Activated CD4-positive, alpha-beta T cell treated with anti-CD3 and anti-CD28 coated beads, Interleukin-2, amount 10 ng/mL, durations not matched to agents 7 days and 5 days (primary cell): ENCODE measurements at regions of chr4 and their contacts with region 1.

Region 1: DNA sequence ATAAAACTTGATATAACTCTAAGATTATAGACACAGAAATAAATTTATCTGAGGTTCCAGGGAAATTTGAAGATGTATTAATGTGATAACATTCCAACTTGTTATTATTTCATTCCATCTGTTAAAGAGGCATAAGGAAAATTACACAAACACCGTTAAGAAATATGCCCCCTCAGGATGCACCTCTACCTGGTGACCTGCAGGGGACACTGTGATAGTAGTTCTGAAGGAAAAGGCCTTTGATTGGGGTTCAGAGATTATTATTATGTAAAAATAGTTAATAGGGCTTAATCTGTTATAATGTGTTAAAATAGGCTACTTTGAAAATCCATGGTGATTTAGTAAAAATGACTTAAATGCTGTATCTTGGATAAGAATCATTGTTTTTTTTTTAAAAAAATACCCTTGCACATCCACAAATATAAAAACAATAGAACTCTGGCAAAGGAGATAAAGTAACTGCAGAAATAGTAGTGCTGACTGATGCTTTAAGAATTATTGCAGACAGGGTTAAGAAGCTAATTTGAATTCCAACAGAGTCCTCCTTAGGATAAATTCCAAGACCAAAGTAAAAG is 6.1 kb upstream of the ABRAXAS1 start:
- DNase-seq: peak; percentile 33
- H3K4me3 Mint-ChIP-seq: no peak overlapping the region
- H3K27ac Mint-ChIP-seq: no peak overlapping the region
- H3K4me1 Mint-ChIP-seq: peaks cover 12% of the 10 kb centered on the region
- H3K27me3 Mint-ChIP-seq: peaks cover 2% of the 10 kb centered on the region

Region 2: DNA sequence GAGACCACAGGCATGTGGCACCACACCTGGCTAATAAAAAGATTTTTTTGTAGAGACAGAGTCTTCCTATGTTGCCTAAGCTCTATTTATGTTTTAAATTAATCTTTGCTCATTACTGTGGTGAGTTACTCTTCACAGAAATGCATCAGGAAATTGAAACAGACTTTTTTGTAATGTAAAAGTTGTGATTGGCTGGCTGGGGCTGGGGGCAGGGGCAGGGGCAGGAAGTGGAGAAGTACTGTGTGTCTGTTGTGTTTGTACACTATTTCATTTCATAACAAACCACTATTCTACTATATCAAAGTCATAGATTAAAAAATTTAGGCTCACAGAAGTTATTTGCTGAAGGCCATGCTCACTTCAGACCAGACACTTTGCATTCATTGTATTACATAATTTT is 13.0 kb after region 1 on chr4:
- CTCF ChIA-PET with region 1: interaction called, 10 read pairs
- POLR2A ChIA-PET with region 1: no interaction called
- DNase-seq: peak; percentile 33
- H3K4me3 Mint-ChIP-seq: no peak overlapping the region
- H3K27ac Mint-ChIP-seq: peak overlapping the region; percentile 77
- H3K4me1 Mint-ChIP-seq: peaks cover 11% of the 10 kb centered on the region
- H3K27me3 Mint-ChIP-seq: no peaks in the 10 kb centered on the region